Prostate gland (tissue), 2 donors: ENCODE measurements at regions of chr12 and their contacts with region 1.

Region 1: GRCh38 chr12:57782608-57783465 is at the start of gene TSFM:
- DNase-seq: peak; percentile 94
- H3K4me3 ChIP-seq: peak within 1 kb of the TSS; percentile 58 to 93
- H3K27ac ChIP-seq: peak within 1 kb of the TSS; percentile 28 to 71
- H3K4me1 ChIP-seq: no peaks in the 10 kb centered on the region
- H3K27me3 ChIP-seq: no peaks in the 10 kb centered on the region
- CTCF ChIP-seq: peak; percentile 95 to 98 (median 96)
- POLR2A ChIP-seq: no peak
- total RNA-seq, gene TSFM: 24.3 to 39.6 TPM

Region 2: DNA sequence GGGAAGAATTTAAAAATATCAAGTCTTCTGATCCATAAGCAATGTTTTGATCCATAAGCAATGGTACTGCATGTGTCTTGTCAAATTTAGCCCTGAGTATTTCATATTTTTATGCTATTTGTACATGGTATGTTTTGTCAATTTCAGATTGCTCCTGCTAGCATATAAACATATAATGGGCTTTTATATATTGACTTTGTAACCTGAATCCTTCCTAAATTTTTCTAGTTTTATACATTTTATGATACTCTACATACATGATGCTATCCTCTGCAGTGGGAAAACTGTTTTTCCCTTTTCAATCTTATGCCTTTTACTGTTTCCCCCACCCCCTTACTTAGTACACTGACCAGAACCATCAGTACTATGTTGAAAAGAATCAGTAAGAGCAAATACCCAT is 427.1 kb before region 1 on chr12:
- intact Hi-C with region 1: no loop called
- DNase-seq: no peak
- H3K4me3 ChIP-seq: no peak overlapping the region
- H3K27ac ChIP-seq: no peak overlapping the region
- H3K4me1 ChIP-seq: no peaks in the 10 kb centered on the region
- H3K27me3 ChIP-seq: no peaks in the 10 kb centered on the region
- CTCF ChIP-seq: no peak
- POLR2A ChIP-seq: no peak

Region 3: GRCh38 chr12:57621497-57622292 is 161.1 kb before region 1 on chr12:
- intact Hi-C with region 1: no loop called
- DNase-seq: peak; percentile 41
- H3K4me3 ChIP-seq: peak overlapping the region; percentile 2 to 23
- H3K27ac ChIP-seq: no peak overlapping the region
- H3K4me1 ChIP-seq: peaks cover 8% of the 10 kb centered on the region
- H3K27me3 ChIP-seq: peaks cover 14% of the 10 kb centered on the region
- CTCF ChIP-seq: peak; percentile 84 to 90 (median 85)
- POLR2A ChIP-seq: no peak

Region 4: GRCh38 chr12:57899010-57899662 is 116.3 kb after region 1 on chr12:
- intact Hi-C with region 1: loop called (anchors 5 kb)
- DNase-seq: peak; percentile 51
- H3K4me3 ChIP-seq: no peak overlapping the region
- H3K27ac ChIP-seq: peak overlapping the region; percentile 38 to 89
- H3K4me1 ChIP-seq: peaks cover 25% of the 10 kb centered on the region
- H3K27me3 ChIP-seq: no peaks in the 10 kb centered on the region
- CTCF ChIP-seq: no peak
- POLR2A ChIP-seq: no peak

Region 5: GRCh38 chr12:58159941-58160340 is 377.1 kb after region 1 on chr12:
- intact Hi-C with region 1: no loop called
- DNase-seq: no peak
- H3K4me3 ChIP-seq: no peak overlapping the region
- H3K27ac ChIP-seq: no peak overlapping the region
- H3K4me1 ChIP-seq: no peaks in the 10 kb centered on the region
- H3K27me3 ChIP-seq: no peaks in the 10 kb centered on the region
- CTCF ChIP-seq: no peak
- POLR2A ChIP-seq: no peak

Region 6: DNA sequence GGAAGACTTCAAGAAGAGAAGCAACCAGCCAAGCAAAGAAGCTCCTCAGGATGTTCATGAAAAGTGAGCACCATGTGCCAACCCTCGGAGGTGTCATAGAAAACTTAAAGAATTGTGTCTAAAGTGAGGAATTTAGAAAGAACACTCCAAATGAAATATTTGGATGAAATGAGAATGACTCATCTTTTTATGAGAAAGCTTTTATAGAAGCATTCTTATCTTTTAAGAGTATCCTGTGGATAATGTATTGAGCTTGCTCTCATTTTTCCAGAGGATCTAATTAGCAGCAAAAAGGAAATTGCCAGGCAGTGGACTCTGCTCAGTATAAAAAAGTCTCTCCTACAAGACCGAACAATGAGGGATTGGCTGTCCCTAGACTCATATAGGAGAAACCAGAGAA is 682.6 kb after region 1 on chr12:
- intact Hi-C with region 1: no loop called
- DNase-seq: no peak
- H3K4me3 ChIP-seq: no peak overlapping the region
- H3K27ac ChIP-seq: no peak overlapping the region
- H3K4me1 ChIP-seq: no peaks in the 10 kb centered on the region
- H3K27me3 ChIP-seq: no peaks in the 10 kb centered on the region
- CTCF ChIP-seq: no peak
- POLR2A ChIP-seq: no peak